Caco-2 (cell line): ENCODE measurements at regions of chr6 and their contacts with region 1.

Region 1: GRCh38 chr6:75296811-75297779 is 12.5 kb upstream of the TMEM30A start:
- DNase-seq: peak in 1 of 2 experiments; percentile 29
- H3K4me3 ChIP-seq: no peak overlapping the region
- H3K4me3 Mint-ChIP-seq: no peak overlapping the region
- H3K27ac Mint-ChIP-seq: no peak overlapping the region
- H3K4me1 ChIP-seq: no peaks in the 10 kb centered on the region
- H3K4me1 Mint-ChIP-seq: no peaks in the 10 kb centered on the region
- H3K27me3 ChIP-seq: no peaks in the 10 kb centered on the region
- H3K27me3 Mint-ChIP-seq: peaks cover 3% of the 10 kb centered on the region
- CTCF ChIP-seq: peak; percentile 57 to 66

Region 2: DNA sequence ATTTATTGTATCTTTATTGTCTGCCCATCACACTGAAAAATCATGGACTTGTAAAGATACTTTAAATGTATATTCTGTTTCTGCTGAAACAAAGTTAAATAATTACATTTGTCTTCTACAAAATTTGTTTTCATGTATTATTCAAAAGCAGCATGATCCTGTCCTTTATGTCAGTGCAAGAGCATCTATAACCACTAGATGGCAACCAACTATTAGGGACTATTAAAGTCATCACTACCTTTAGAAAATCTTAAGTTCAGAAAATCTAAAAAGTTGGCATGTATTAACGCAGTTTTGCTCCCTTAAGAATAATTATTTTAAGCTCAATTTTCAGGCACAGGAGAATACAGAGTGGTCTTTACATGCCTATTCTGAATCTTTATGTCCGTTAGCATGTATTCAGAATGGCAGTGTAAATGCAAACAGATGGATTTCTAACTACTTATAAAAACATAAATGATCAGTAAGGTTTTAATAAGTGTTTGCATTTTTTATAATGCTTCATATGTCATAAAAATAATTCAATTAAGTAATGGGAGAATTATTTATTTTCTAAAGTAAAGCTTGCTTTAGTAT is 30.3 kb before region 1 on chr6:
- CTCF ChIA-PET with region 1: interaction called, 3 read pairs
- POLR2A ChIA-PET with region 1: no interaction called
- intact Hi-C with region 1: loop called (anchors 1 kb)
- DNase-seq: peak in 1 of 2 experiments; percentile 26
- H3K4me3 ChIP-seq: no peak overlapping the region
- H3K4me3 Mint-ChIP-seq: no peak overlapping the region
- H3K27ac Mint-ChIP-seq: no peak overlapping the region
- H3K4me1 ChIP-seq: no peaks in the 10 kb centered on the region
- H3K4me1 Mint-ChIP-seq: no peaks in the 10 kb centered on the region
- H3K27me3 ChIP-seq: no peaks in the 10 kb centered on the region
- H3K27me3 Mint-ChIP-seq: no peaks in the 10 kb centered on the region
- CTCF ChIP-seq: peak; percentile 68 to 74

Region 3: GRCh38 chr6:75349262-75349984 is 52.3 kb after region 1 on chr6:
- CTCF ChIA-PET with region 1: no interaction called
- POLR2A ChIA-PET with region 1: no interaction called
- intact Hi-C with region 1: loop called (anchors 5 kb)
- DNase-seq: peak; percentile 44 to 46
- H3K4me3 ChIP-seq: peak overlapping the region; percentile 26; the same call in 1 of the 2 replicates
- H3K4me3 Mint-ChIP-seq: peak overlapping the region; percentile 72
- H3K27ac Mint-ChIP-seq: no peak overlapping the region
- H3K4me1 ChIP-seq: peaks cover 7% of the 10 kb centered on the region; the same call in 1 of the 2 replicates
- H3K4me1 Mint-ChIP-seq: peaks cover 6% of the 10 kb centered on the region
- H3K27me3 ChIP-seq: no peaks in the 10 kb centered on the region
- H3K27me3 Mint-ChIP-seq: peaks cover 4% of the 10 kb centered on the region
- CTCF ChIP-seq: no peak

Region 4: DNA sequence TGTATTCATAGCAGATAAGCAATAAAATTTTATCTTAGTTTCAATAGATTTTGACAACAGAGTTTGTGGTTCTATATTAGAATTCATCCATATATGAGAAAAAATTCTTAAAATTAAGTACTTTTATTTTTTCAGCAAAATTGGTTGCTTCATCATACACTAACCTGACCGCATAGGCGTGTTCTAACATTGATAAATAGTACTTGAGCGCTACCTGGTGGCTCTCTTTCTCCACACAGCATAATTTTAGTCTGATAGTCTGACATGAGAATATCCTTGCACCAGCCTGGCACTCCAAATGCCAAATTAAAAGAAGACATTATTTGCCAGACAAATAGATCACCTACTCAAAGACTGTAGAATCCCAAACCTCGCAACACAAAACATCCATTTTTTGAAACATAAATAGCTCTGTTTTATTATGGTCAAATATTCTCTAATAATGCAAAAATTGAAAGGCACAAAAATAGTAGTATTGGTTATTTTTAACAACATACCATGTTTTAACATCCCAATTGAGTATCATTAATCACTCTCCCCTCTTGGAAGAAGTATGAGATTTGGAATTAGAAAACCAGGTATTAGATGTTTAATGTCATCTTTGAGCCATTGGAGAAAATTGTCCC is 229.5 kb after region 1 on chr6:
- CTCF ChIA-PET with region 1: interaction called, 9 read pairs
- POLR2A ChIA-PET with region 1: no interaction called
- intact Hi-C with region 1: loop called (anchors 1 kb)
- DNase-seq: peak; percentile 49 to 69
- H3K4me3 ChIP-seq: no peak overlapping the region
- H3K4me3 Mint-ChIP-seq: no peak overlapping the region
- H3K27ac Mint-ChIP-seq: no peak overlapping the region
- H3K4me1 ChIP-seq: peaks cover 10% of the 10 kb centered on the region
- H3K4me1 Mint-ChIP-seq: peaks cover 12% of the 10 kb centered on the region
- H3K27me3 ChIP-seq: no peaks in the 10 kb centered on the region
- H3K27me3 Mint-ChIP-seq: no peaks in the 10 kb centered on the region
- CTCF ChIP-seq: peak; percentile 60 to 73

Region 5: GRCh38 chr6:75546381-75546780 is 249.3 kb after region 1 on chr6:
- CTCF ChIA-PET with region 1: interaction called, 3 read pairs
- POLR2A ChIA-PET with region 1: no interaction called
- intact Hi-C with region 1: loop called (anchors 1 kb)
- DNase-seq: no peak
- H3K4me3 ChIP-seq: no peak overlapping the region
- H3K4me3 Mint-ChIP-seq: no peak overlapping the region
- H3K27ac Mint-ChIP-seq: no peak overlapping the region
- H3K4me1 ChIP-seq: no peaks in the 10 kb centered on the region
- H3K4me1 Mint-ChIP-seq: no peaks in the 10 kb centered on the region
- H3K27me3 ChIP-seq: no peaks in the 10 kb centered on the region
- H3K27me3 Mint-ChIP-seq: no peaks in the 10 kb centered on the region
- CTCF ChIP-seq: no peak